ENCODE measurements at regions of chr19 and their contacts with region 1.

Region 1: GRCh38 chr19:7799640-7800355 is 30.2 kb upstream of the EVI5L start:
- DNase-seq: peak; percentile 81
- ATAC-seq: peak; percentile 89
- H3K4me3 ChIP-seq: peak overlapping the region; percentile 20
- H3K27ac ChIP-seq: no peak overlapping the region
- H3K4me1 ChIP-seq: peaks cover 6% of the 10 kb centered on the region
- H3K27me3 ChIP-seq: no peaks in the 10 kb centered on the region
- CTCF ChIP-seq: peak; percentile 71
- POLR2A ChIP-seq: no peak
- RAD21 ChIP-seq: peak; percentile 78

Region 2: GRCh38 chr19:7104747-7105447 is 694.9 kb before region 1 on chr19:
- CTCF ChIA-PET with region 1: no interaction called
- POLR2A ChIA-PET with region 1: no interaction called
- dilution Hi-C with region 1: no loop called
- in situ Hi-C with region 1: loop called (anchors 25 kb)
- intact Hi-C with region 1: no loop called
- DNase-seq: no peak
- ATAC-seq: no peak
- H3K4me3 ChIP-seq: no peak overlapping the region
- H3K27ac ChIP-seq: no peak overlapping the region
- H3K4me1 ChIP-seq: no peaks in the 10 kb centered on the region
- H3K27me3 ChIP-seq: peaks cover 2% of the 10 kb centered on the region; the same call in 1 of the 2 replicates
- CTCF ChIP-seq: no peak
- POLR2A ChIP-seq: no peak
- RAD21 ChIP-seq: no peak

Region 3: GRCh38 chr19:7355151-7355820 is 444.5 kb before region 1 on chr19:
- CTCF ChIA-PET with region 1: interaction called, 11 read pairs
- POLR2A ChIA-PET with region 1: no interaction called
- dilution Hi-C with region 1: no loop called
- in situ Hi-C with region 1: loop called (anchors 10 kb)
- intact Hi-C with region 1: loop called (anchors 2 kb)
- DNase-seq: peak; percentile 59
- ATAC-seq: peak; percentile 79
- H3K4me3 ChIP-seq: no peak overlapping the region
- H3K27ac ChIP-seq: no peak overlapping the region
- H3K4me1 ChIP-seq: no peaks in the 10 kb centered on the region
- H3K27me3 ChIP-seq: no peaks in the 10 kb centered on the region; the same call in 1 of the 2 replicates
- CTCF ChIP-seq: no peak
- POLR2A ChIP-seq: no peak
- RAD21 ChIP-seq: no peak

Region 4: GRCh38 chr19:7366701-7367420 is 432.9 kb before region 1 on chr19:
- CTCF ChIA-PET with region 1: no interaction called
- POLR2A ChIA-PET with region 1: no interaction called
- dilution Hi-C with region 1: no loop called
- in situ Hi-C with region 1: loop called (anchors 10 kb)
- intact Hi-C with region 1: no loop called
- DNase-seq: peak; percentile 33
- ATAC-seq: no peak
- H3K4me3 ChIP-seq: no peak overlapping the region
- H3K27ac ChIP-seq: no peak overlapping the region
- H3K4me1 ChIP-seq: no peaks in the 10 kb centered on the region
- H3K27me3 ChIP-seq: peaks cover 1% of the 10 kb centered on the region; the same call in 1 of the 2 replicates
- CTCF ChIP-seq: peak; percentile 37; the same call in 1 of the 2 replicates
- POLR2A ChIP-seq: no peak
- RAD21 ChIP-seq: no peak

Region 5: DNA sequence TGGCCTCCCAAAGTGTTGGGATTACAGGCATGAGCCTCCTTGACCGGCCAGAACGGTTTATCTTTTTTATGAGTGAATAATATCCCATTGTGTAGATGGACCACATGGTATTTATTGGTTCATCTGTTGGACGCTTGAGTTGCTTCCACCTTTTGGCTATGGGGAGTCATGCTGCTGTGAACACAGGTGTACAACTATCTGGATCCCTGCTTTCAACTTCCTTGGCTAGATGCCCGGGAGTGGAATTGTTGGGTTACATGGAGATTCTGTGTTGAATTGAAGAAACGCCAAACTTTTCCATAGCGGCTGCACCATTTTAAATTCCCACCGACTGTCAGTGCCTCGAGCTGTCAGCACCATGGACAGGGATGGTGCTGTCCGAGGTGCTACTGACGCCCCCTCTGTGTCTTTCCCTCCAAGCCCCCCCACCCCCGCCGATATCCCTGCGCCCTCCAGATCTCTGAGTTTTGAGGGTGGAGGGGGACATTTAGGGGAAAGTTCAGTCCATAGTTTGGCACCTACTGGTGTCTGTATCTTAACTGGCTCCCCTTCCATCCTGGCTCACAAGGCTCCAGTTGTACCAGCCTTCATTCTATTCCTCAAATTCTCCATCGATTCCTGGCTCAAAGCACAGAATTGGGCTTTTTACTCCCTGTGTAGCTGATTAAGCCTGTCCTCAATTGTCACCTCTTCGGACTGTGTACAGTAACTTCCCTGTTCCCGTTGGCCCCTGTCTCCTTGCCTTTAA is 237.0 kb before region 1 on chr19:
- CTCF ChIA-PET with region 1: interaction called, 53 read pairs
- POLR2A ChIA-PET with region 1: no interaction called
- dilution Hi-C with region 1: no loop called
- in situ Hi-C with region 1: loop called (anchors 5 kb)
- intact Hi-C with region 1: loop called (anchors 1 kb)
- DNase-seq: no peak
- ATAC-seq: peak; percentile 48; the same call in 1 of the 2 replicates
- H3K4me3 ChIP-seq: no peak overlapping the region
- H3K27ac ChIP-seq: no peak overlapping the region
- H3K4me1 ChIP-seq: no peaks in the 10 kb centered on the region
- H3K27me3 ChIP-seq: no peaks in the 10 kb centered on the region
- CTCF ChIP-seq: no peak
- POLR2A ChIP-seq: no peak
- RAD21 ChIP-seq: no peak

Region 6: GRCh38 chr19:7652061-7652641 is 147.6 kb before region 1 on chr19:
- CTCF ChIA-PET with region 1: interaction called, 9 read pairs
- POLR2A ChIA-PET with region 1: no interaction called
- dilution Hi-C with region 1: no loop called
- in situ Hi-C with region 1: no loop called
- intact Hi-C with region 1: loop called (anchors 1 kb)
- DNase-seq: peak; percentile 60
- ATAC-seq: peak; percentile 90
- H3K4me3 ChIP-seq: peak overlapping the region; percentile 8; the same call in 1 of the 2 replicates
- H3K27ac ChIP-seq: no peak overlapping the region
- H3K4me1 ChIP-seq: no peaks in the 10 kb centered on the region
- H3K27me3 ChIP-seq: peaks cover 6% of the 10 kb centered on the region; the same call in 1 of the 2 replicates
- CTCF ChIP-seq: peak; percentile 97
- POLR2A ChIP-seq: no peak
- RAD21 ChIP-seq: peak; percentile 62

Region 7: GRCh38 chr19:7680606-7681339 is 119.0 kb before region 1 on chr19 and contains the start of gene TRAPPC5:
- CTCF ChIA-PET with region 1: interaction called, 10 read pairs
- POLR2A ChIA-PET with region 1: interaction called, 7 read pairs
- dilution Hi-C with region 1: no loop called
- in situ Hi-C with region 1: loop called (anchors 10 kb)
- intact Hi-C with region 1: loop called (anchors 1 kb)
- DNase-seq: peak; percentile 76
- ATAC-seq: peak; percentile 93
- H3K4me3 ChIP-seq: peak within 1 kb of the TSS; percentile 87
- H3K27ac ChIP-seq: peak within 1 kb of the TSS; percentile 86
- H3K4me1 ChIP-seq: peaks cover 4% of the 10 kb centered on the region; the same call in 1 of the 2 replicates
- H3K27me3 ChIP-seq: peaks cover 8% of the 10 kb centered on the region
- CTCF ChIP-seq: peak; percentile 97
- POLR2A ChIP-seq: no peak
- RAD21 ChIP-seq: peak; percentile 83
- total RNA-seq, gene TRAPPC5: 54.7 and 73.0 TPM in 2 replicates

Region 8: GRCh38 chr19:7756258-7756657 is 43.5 kb before region 1 on chr19:
- CTCF ChIA-PET with region 1: no interaction called
- POLR2A ChIA-PET with region 1: no interaction called
- dilution Hi-C with region 1: no loop called
- in situ Hi-C with region 1: no loop called
- intact Hi-C with region 1: no loop called
- DNase-seq: no peak
- ATAC-seq: no peak
- H3K4me3 ChIP-seq: no peak overlapping the region
- H3K27ac ChIP-seq: no peak overlapping the region
- H3K4me1 ChIP-seq: no peaks in the 10 kb centered on the region
- H3K27me3 ChIP-seq: no peaks in the 10 kb centered on the region
- CTCF ChIP-seq: no peak
- POLR2A ChIP-seq: no peak
- RAD21 ChIP-seq: no peak

Region 9: GRCh38 chr19:7766535-7766934 is 33.3 kb before region 1 on chr19:
- CTCF ChIA-PET with region 1: no interaction called
- POLR2A ChIA-PET with region 1: no interaction called
- dilution Hi-C with region 1: no loop called
- in situ Hi-C with region 1: no loop called
- intact Hi-C with region 1: no loop called
- DNase-seq: no peak
- ATAC-seq: no peak
- H3K4me3 ChIP-seq: no peak overlapping the region
- H3K27ac ChIP-seq: no peak overlapping the region
- H3K4me1 ChIP-seq: no peaks in the 10 kb centered on the region
- H3K27me3 ChIP-seq: peaks cover 10% of the 10 kb centered on the region; the same call in 1 of the 2 replicates
- CTCF ChIP-seq: no peak
- POLR2A ChIP-seq: no peak
- RAD21 ChIP-seq: no peak

Region 10: DNA sequence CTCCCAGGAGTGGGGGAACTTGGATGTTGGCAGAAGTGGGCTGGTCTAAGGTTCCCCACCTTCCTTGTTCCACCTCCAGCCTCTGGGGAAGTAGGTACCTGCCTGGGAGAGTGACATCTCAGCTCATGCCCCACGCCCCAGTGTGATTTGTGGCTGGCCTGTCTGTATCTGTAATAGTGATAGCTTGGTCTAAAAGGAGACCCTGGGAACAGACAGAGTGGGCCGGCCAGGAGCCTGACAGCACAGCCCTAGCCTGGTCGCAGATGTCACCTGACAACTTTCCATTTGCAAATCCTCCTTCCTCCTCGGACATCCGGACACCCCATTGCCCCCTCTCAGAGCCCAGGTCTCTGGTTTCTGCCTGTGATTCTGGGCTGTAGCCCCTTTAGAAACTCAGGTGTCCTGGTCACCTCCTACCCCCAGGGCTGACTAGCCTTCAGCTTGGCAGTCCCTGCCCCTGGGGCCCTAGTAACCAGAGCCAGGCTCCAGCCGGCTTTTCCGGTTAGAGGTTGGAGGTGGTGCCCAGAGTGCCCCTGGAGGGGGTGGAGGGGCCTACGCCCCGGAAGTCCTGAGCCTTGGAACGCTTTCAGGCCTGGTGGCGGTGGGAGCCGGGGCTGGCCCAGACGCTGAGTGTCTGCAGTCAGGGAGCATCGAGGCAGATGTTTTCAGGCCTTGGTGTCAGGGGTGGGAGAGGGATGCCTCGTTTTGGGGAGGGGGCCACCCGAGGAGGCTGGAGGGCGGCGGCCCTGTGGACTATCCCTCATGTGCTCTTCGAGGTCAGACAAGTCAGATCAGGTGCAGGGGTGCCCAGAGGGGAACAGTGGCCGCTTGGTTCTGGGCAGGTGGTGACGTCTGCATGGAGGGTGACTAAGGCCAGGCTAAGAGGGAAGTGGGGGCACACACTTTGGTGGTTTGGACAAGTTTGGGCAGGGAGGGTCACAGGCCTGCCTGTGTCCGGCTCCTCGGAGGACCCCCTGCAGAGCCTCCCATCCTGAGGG is 95.1 kb after region 1 on chr19:
- CTCF ChIA-PET with region 1: no interaction called
- POLR2A ChIA-PET with region 1: no interaction called
- dilution Hi-C with region 1: no loop called
- in situ Hi-C with region 1: no loop called
- intact Hi-C with region 1: no loop called
- DNase-seq: no peak
- ATAC-seq: no peak
- H3K4me3 ChIP-seq: no peak overlapping the region
- H3K27ac ChIP-seq: no peak overlapping the region
- H3K4me1 ChIP-seq: 0 out of 2 replicates have a peak, but pooled peaks cover 2% of the 10 kb centered on the region
- H3K27me3 ChIP-seq: no peaks in the 10 kb centered on the region
- CTCF ChIP-seq: no peak
- POLR2A ChIP-seq: no peak
- RAD21 ChIP-seq: no peak